Left ventricle myocardium inferior (tissue), 1 donor: ENCODE measurements at regions of chr16 and their contacts with region 1.

Region 1: GRCh38 chr16:2244245-2244691 is 7.1 kb downstream of the ECI1 start:
- DNase-seq: no peak
- H3K4me3 ChIP-seq: no peak overlapping the region
- H3K27ac ChIP-seq: no peak overlapping the region
- H3K4me1 ChIP-seq: peaks cover 10% of the 10 kb centered on the region
- H3K27me3 ChIP-seq: no peaks in the 10 kb centered on the region
- CTCF ChIP-seq: no peak

Region 2: GRCh38 chr16:2071454-2072202 is 172.6 kb before region 1 on chr16:
- intact Hi-C with region 1: loop called (anchors 10 kb)
- DNase-seq: no peak
- H3K4me3 ChIP-seq: no peak overlapping the region
- H3K27ac ChIP-seq: no peak overlapping the region
- H3K4me1 ChIP-seq: no peaks in the 10 kb centered on the region
- H3K27me3 ChIP-seq: no peaks in the 10 kb centered on the region
- CTCF ChIP-seq: no peak

Region 3: GRCh38 chr16:2339521-2340484 is 95.5 kb after region 1 on chr16:
- intact Hi-C with region 1: no loop called
- DNase-seq: peak; percentile 52
- H3K4me3 ChIP-seq: peak overlapping the region; percentile 86
- H3K27ac ChIP-seq: peak overlapping the region; percentile 68
- H3K4me1 ChIP-seq: peaks cover 29% of the 10 kb centered on the region
- H3K27me3 ChIP-seq: no peaks in the 10 kb centered on the region
- CTCF ChIP-seq: no peak

Region 4: GRCh38 chr16:2537453-2538379 is 293.4 kb after region 1 on chr16 and contains the start of gene PDPK1:
- intact Hi-C with region 1: no loop called
- DNase-seq: peak; percentile 95
- H3K4me3 ChIP-seq: peak within 1 kb of the TSS; percentile 74
- H3K27ac ChIP-seq: peak within 1 kb of the TSS; percentile 92
- H3K4me1 ChIP-seq: peaks cover 55% of the 10 kb centered on the region
- H3K27me3 ChIP-seq: no peaks in the 10 kb centered on the region
- CTCF ChIP-seq: no peak
- total RNA-seq, gene PDPK1: 46.4 TPM